ENCODE measurements at regions of chr9 and their contacts with region 1.

Region 1: DNA sequence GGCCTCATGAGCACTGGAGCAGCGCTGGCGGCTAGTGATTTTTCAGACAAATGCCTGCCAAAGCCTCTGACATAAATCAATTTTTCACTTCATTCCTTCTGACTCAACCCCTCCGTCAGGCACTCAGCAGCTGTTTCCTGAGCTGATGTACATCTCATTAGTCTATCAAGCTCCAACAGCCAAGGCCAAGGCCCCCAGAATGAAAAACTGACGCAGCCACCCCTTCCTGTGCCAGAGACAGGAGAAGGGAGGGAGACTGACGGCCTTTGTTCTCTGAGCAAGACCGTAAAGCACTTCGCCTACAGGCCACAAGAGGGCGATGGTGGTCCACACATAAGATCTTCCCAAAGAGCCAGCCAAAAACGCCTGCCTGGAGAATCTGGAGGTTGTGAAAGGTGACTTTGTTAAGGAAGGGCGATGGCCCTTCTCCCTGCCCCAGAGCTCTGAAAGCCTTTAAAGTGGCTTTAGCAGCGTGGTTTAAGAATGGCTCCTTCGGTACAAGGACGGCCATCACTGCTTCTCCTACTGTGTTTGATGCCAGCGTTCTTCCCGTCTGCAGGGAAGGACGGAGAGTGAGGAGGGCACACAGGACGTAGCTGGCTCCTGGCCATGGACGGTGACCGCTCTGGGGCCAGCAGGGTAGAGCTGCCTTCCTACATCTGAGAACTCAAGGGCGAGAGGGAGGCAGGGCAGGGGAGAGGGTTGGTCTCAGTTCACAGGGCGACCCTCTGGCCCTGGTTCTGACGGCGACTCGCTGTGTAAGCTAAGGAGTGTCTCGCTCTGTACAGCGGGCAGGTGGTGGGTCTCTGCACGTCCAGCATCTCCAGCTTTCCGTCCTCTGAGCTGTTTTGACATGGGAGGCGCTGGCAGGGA is 37.0 kb downstream of the ALG2 start:
- DNase-seq: peak; percentile 65 to 82 (median 73)
- H3K4me3 ChIP-seq: peak overlapping the region in 1 of 3 experiments; percentile 41
- H3K4me3 Mint-ChIP-seq: peak overlapping the region; percentile 39 to 46
- H3K27ac ChIP-seq: no peak overlapping the region
- H3K27ac Mint-ChIP-seq: peak overlapping the region in 2 of 7 donors; percentile 63 to 64
- H3K4me1 ChIP-seq: peaks cover 31 to 36% of the 10 kb centered on the region in 2 donors
- H3K4me1 Mint-ChIP-seq: peaks cover 33% of the 10 kb centered on the region
- H3K27me3 ChIP-seq: no peaks in the 10 kb centered on the region
- H3K27me3 Mint-ChIP-seq: peaks cover 0 to 2% (median 0%) of the 10 kb centered on the region in 3 donors
- CTCF ChIP-seq: peak; percentile 94

Region 2: DNA sequence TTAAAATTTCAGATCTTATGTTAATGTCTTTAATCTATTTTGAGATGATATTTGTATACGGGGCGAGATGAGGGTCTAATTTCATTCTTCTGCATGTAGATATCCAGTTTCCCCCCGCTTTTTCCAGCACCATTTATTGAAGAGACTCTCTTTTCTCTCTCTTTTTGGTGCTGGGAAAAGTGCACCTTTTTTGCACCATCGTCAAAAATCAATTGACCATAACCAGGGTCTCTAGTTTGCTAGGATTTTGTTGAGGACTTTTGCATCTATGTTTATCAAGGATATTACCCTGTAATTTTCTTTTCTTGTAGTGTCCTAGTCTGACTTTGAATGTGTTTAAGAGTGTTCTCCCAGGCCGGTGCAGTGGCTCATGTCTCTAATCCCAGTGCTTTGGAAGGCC is 815.1 kb after region 1 on chr9:
- intact Hi-C with region 1: loop called in 1 of 2 experiments (anchors 10 kb)
- DNase-seq: no peak
- H3K4me3 ChIP-seq: no peak overlapping the region
- H3K4me3 Mint-ChIP-seq: no peak overlapping the region
- H3K27ac ChIP-seq: no peak overlapping the region
- H3K27ac Mint-ChIP-seq: no peak overlapping the region
- H3K4me1 ChIP-seq: no peaks in the 10 kb centered on the region
- H3K4me1 Mint-ChIP-seq: no peaks in the 10 kb centered on the region
- H3K27me3 ChIP-seq: no peaks in the 10 kb centered on the region
- H3K27me3 Mint-ChIP-seq: peaks cover 0 to 2% (median 0%) of the 10 kb centered on the region in 3 donors
- CTCF ChIP-seq: no peak

Region 3: GRCh38 chr9:100011062-100011681 is 826.5 kb after region 1 on chr9:
- intact Hi-C with region 1: loop called (anchors 2 to 10 kb)
- DNase-seq: peak; percentile 43 to 61 (median 58)
- H3K4me3 ChIP-seq: no peak overlapping the region
- H3K4me3 Mint-ChIP-seq: no peak overlapping the region
- H3K27ac ChIP-seq: no peak overlapping the region
- H3K27ac Mint-ChIP-seq: no peak overlapping the region
- H3K4me1 ChIP-seq: no peaks in the 10 kb centered on the region
- H3K4me1 Mint-ChIP-seq: no peaks in the 10 kb centered on the region
- H3K27me3 ChIP-seq: no peaks in the 10 kb centered on the region
- H3K27me3 Mint-ChIP-seq: no peaks in the 10 kb centered on the region
- CTCF ChIP-seq: peak; percentile 82

Region 4: DNA sequence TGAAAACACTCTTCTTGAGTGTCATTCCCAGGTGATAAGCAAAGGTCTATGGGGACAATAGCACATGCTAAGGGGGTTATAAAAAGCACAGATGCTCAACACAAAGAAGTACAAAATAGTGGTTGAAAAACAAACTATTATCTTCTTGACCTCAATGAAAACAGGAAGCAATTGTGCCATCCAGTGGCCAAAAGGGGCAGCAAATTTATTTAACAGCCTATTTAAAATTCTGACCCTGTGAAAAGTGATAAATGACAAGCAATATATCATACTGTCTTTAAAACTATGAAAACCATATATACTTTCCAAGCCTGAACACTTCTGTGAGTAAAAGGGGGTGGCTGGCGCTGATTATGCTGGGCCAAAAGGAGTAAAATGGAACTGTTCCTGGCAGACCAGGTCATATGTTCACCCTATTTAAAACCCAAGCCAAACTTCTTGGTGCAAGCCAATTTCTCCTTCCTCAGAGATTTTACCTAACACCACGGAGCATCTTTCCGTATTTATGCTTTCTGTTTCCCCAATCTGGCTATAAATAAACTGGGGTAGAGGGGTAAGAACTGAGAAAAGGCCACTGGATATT is 1138.3 kb after region 1 on chr9:
- intact Hi-C with region 1: loop called (anchors 5 to 10 kb)
- DNase-seq: peak; percentile 12 to 35 (median 29)
- H3K4me3 ChIP-seq: no peak overlapping the region
- H3K4me3 Mint-ChIP-seq: no peak overlapping the region
- H3K27ac ChIP-seq: no peak overlapping the region
- H3K27ac Mint-ChIP-seq: peak overlapping the region in 2 of 7 donors; percentile 20
- H3K4me1 ChIP-seq: no peaks in the 10 kb centered on the region
- H3K4me1 Mint-ChIP-seq: no peaks in the 10 kb centered on the region
- H3K27me3 ChIP-seq: no peaks in the 10 kb centered on the region
- H3K27me3 Mint-ChIP-seq: no peaks in the 10 kb centered on the region
- CTCF ChIP-seq: peak; percentile 75